Heart right ventricle (tissue), 16 donors: ENCODE measurements at regions of chr11 and their contacts with region 1.

Region 1: GRCh38 chr11:131867457-131868257 is 497.2 kb downstream of the NTM start:
- DNase-seq: peak; percentile 62 to 64
- ATAC-seq: peak; percentile 50 to 89 (median 80)
- H3K4me3 ChIP-seq: no peak overlapping the region
- H3K27ac ChIP-seq: no peak overlapping the region
- H3K4me1 ChIP-seq: no peaks in the 10 kb centered on the region
- H3K27me3 ChIP-seq: peaks cover 0 to 23% (median 0%) of the 10 kb centered on the region in 7 donors
- CTCF ChIP-seq: peak in 8 of 9 donors; percentile 51 to 81 (median 67)

Region 2: DNA sequence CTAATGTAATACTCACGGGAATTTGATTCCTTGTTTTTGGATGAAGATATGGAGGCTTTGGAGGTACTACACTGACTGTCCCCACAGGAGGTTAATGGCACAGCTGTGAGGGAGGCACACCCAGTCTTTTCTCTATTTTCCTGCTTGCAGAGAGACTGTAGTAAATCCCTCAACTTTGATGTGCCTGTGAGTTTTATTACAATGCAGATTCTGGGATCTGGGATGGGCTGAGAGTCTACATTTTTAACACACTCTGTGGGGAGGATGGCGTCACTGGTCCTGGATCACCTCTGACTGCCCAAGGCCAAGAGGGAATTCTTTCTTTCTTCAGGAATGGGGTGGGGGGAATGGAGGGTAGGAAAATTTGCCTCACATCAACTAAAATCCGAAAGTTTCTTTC is 577.5 kb before region 1 on chr11:
- intact Hi-C with region 1: no loop called
- DNase-seq: no peak
- ATAC-seq: no peak
- H3K4me3 ChIP-seq: no peak overlapping the region
- H3K27ac ChIP-seq: no peak overlapping the region
- H3K4me1 ChIP-seq: no peaks in the 10 kb centered on the region
- H3K27me3 ChIP-seq: peaks cover 0 to 18% (median 0%) of the 10 kb centered on the region in 7 donors
- CTCF ChIP-seq: no peak

Region 3: GRCh38 chr11:131748151-131749050 is 119.3 kb before region 1 on chr11:
- intact Hi-C with region 1: loop called in 1 of 10 experiments (anchors 10 kb)
- DNase-seq: peak; percentile 30 to 38
- ATAC-seq: peak in 7 of 8 donors; percentile 52 to 85 (median 72)
- H3K4me3 ChIP-seq: no peak overlapping the region
- H3K27ac ChIP-seq: peak overlapping the region in 1 of 10 donors; percentile 22
- H3K4me1 ChIP-seq: peaks cover 0 to 11% (median 0%) of the 10 kb centered on the region in 9 donors
- H3K27me3 ChIP-seq: peaks cover 0 to 35% (median 9%) of the 10 kb centered on the region in 7 donors
- CTCF ChIP-seq: peak; percentile 48 to 80 (median 77)

Region 4: GRCh38 chr11:132126973-132127899 is 259.6 kb after region 1 on chr11:
- intact Hi-C with region 1: loop called in 8 of 10 experiments (anchors 2 to 10 kb)
- DNase-seq: peak in 1 of 2 donors; percentile 73
- ATAC-seq: peak; percentile 20 to 78 (median 74)
- H3K4me3 ChIP-seq: peak overlapping the region in 7 of 10 donors; percentile 17 to 47 (median 42)
- H3K27ac ChIP-seq: peak overlapping the region in 2 of 10 donors; percentile 56 to 68
- H3K4me1 ChIP-seq: peaks cover 0 to 19% (median 14%) of the 10 kb centered on the region in 9 donors
- H3K27me3 ChIP-seq: peaks cover 0 to 30% (median 0%) of the 10 kb centered on the region in 7 donors
- CTCF ChIP-seq: peak in 8 of 9 donors; percentile 20 to 68 (median 56)

Region 5: DNA sequence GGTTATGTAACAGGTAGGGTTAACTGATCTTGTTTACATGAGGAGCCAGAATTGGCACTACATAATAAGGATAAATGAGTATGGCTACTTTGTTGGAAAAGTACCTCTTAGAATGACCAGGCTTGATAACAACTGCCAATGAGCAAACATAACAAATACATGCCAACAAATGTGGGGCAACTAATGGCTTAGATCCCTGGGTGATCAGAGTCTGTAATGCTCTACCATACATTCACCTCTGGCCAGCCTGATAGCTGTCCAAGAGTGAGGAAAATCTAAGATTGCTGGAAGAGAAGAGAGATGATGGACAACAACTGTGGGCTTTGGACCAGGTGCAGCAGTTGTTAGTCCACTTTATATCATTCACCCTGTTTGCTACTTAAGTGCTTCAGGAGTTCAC is 527.8 kb after region 1 on chr11:
- intact Hi-C with region 1: loop called in 4 of 10 experiments (anchors 5 to 10 kb)
- DNase-seq: no peak
- ATAC-seq: no peak
- H3K4me3 ChIP-seq: no peak overlapping the region
- H3K27ac ChIP-seq: no peak overlapping the region
- H3K4me1 ChIP-seq: no peaks in the 10 kb centered on the region
- H3K27me3 ChIP-seq: peaks cover 0 to 22% (median 4%) of the 10 kb centered on the region in 7 donors
- CTCF ChIP-seq: no peak

Region 6: GRCh38 chr11:132941024-132941646 is 1073.5 kb after region 1 on chr11:
- intact Hi-C with region 1: loop called in 2 of 10 experiments (anchors 5 to 10 kb)
- DNase-seq: peak in 1 of 2 donors; percentile 22
- ATAC-seq: peak in 1 of 8 donors; percentile 23
- H3K4me3 ChIP-seq: no peak overlapping the region
- H3K27ac ChIP-seq: no peak overlapping the region
- H3K4me1 ChIP-seq: peaks cover 0 to 7% (median 4%) of the 10 kb centered on the region in 9 donors
- H3K27me3 ChIP-seq: peaks cover 14 to 51% (median 45%) of the 10 kb centered on the region in 7 donors
- CTCF ChIP-seq: peak; percentile 58 to 88 (median 80)